Activated T-helper 2 cell treated with anti-CD3 and anti-CD28 coated beads, Interferon-gamma antibody, Interleukin-2, Interleukin-4, amounts not matched to agents 10 μg/mL and 5 μg/mL and 100 μg/mL, durations not matched to agents 14 hours and 24 hours and 36 hours (primary cell): ENCODE measurements at regions of chr6 and their contacts with region 1.

Region 1: DNA sequence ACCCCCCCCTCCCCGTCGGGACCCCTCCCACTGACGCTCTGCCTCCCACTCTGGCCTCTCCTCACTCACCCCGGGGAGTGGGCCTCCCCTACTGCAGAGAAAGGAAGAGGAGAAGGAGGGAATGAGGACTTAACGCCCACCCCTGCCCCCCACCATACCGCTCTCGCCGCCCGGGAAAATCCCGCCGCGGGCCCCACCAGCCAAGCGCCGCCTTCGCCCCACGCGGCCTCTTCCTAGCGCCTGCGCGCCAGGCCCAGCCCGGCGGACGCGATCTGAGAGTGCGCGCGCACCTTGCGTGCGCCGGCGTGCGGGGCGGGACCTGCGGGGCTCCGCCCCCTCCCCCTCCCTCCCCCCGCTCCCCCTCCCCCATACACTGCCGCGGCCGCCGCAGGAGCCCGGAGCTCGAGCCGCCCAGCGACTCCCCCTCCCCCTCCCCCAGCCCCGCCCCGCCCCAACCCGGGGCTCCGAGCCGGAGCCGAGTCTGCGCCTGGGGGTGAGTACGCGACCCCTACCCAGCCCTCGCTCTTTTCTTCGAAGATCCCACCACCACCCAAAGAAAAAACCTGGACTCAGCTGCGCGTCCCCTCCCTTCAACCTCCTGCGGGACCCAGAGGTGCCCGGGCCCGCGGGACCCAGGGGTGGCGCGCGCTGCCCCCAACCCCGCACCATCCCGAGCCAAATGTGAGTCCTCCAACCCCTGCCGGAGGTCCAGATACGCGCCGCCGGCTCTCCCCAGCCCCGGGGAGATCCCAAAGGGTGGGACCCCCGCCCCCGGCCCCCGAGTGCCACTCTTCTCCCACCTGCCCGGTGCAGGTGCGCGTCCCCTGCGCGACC is at the starts of genes MRPL14 and TMEM63B:
- DNase-seq: peak; percentile 86
- H3K4me3 Mint-ChIP-seq: peak within 1 kb of the TSS; percentile 85
- H3K27ac Mint-ChIP-seq: peak within 1 kb of the TSS; percentile 93
- H3K4me1 Mint-ChIP-seq: peaks cover 43% of the 10 kb centered on the region
- H3K27me3 Mint-ChIP-seq: no peaks in the 10 kb centered on the region
- total RNA-seq, gene MRPL14: 67.3 and 70.3 TPM in 2 replicates
- total RNA-seq, gene TMEM63B: 20.3 and 23.6 TPM in 2 replicates

Region 2: GRCh38 chr6:44246663-44247337 is 119.4 kb after region 1 on chr6 and contains the start of gene HSP90AB1:
- intact Hi-C with region 1: loop called (anchors 2 kb)
- DNase-seq: peak; percentile 95
- H3K4me3 Mint-ChIP-seq: peak within 1 kb of the TSS; percentile 96
- H3K27ac Mint-ChIP-seq: peak within 1 kb of the TSS; percentile 99
- H3K4me1 Mint-ChIP-seq: peaks cover 41% of the 10 kb centered on the region
- H3K27me3 Mint-ChIP-seq: peaks cover 3% of the 10 kb centered on the region
- total RNA-seq, gene HSP90AB1: 2,402 and 2,404 TPM in 2 replicates

Region 3: GRCh38 chr6:44387346-44388133 is 260.1 kb after region 1 on chr6 and contains the start of gene CDC5L:
- intact Hi-C with region 1: loop called (anchors 2 kb)
- DNase-seq: peak; percentile 94
- H3K4me3 Mint-ChIP-seq: peak within 1 kb of the TSS; percentile 96
- H3K27ac Mint-ChIP-seq: peak within 1 kb of the TSS; percentile 98
- H3K4me1 Mint-ChIP-seq: peaks cover 33% of the 10 kb centered on the region
- H3K27me3 Mint-ChIP-seq: peaks cover 17% of the 10 kb centered on the region
- total RNA-seq, gene CDC5L: 27.7 and 28.1 TPM in 2 replicates